ENCODE measurements at regions of chr3 and their contacts with region 1.

Region 1: DNA sequence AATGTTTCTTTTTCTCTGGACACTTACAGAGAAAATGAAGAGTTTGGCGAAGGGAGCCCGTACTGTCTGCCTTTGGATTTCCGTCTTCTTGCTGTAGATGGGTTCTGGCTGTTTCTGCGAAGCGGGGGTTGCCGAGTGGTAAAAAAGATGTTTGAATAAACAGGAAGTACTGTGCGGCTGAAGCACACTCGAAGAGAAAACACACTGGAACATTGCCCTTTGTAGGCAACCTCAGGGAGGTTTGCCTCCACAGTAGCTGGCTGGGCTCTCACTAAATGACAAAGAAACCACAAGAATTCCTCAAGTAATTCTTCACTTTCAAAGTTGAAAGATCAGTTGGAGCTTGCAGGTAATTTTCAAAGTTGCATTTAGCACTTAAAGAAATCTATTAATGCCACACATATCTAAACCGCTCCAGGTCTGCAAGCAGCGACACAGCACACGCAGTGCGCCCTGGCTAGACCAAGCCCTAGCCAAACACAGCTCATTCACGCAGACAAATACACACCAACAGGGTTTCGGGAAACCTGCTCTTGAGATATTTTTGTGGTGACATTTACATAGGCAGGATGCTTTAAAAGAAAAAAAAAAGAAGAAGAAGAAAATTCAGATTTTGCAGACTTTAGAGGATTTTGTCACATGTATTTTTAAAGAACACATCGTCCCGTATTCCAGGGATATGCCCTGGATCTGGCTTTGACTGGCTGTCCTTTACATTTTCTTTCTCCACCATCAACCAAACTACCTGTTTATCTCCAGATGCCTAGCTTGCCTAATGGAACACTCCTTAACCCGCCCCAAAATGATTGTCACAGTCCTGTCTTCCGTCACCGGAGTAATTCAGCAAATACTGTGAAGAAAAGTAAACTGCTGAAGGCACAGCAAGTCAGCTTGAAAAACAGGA is 452.8 kb downstream of the FOXP1 start:
- DNase-seq: peak; percentile 87
- ATAC-seq: peak; percentile 62
- H3K4me3 Mint-ChIP-seq: peak overlapping the region; percentile 77
- H3K27ac Mint-ChIP-seq: peak overlapping the region; percentile 93
- H3K4me1 Mint-ChIP-seq: peaks cover 68% of the 10 kb centered on the region
- H3K27me3 Mint-ChIP-seq: no peaks in the 10 kb centered on the region
- CTCF ChIP-seq: no peak

Region 2: DNA sequence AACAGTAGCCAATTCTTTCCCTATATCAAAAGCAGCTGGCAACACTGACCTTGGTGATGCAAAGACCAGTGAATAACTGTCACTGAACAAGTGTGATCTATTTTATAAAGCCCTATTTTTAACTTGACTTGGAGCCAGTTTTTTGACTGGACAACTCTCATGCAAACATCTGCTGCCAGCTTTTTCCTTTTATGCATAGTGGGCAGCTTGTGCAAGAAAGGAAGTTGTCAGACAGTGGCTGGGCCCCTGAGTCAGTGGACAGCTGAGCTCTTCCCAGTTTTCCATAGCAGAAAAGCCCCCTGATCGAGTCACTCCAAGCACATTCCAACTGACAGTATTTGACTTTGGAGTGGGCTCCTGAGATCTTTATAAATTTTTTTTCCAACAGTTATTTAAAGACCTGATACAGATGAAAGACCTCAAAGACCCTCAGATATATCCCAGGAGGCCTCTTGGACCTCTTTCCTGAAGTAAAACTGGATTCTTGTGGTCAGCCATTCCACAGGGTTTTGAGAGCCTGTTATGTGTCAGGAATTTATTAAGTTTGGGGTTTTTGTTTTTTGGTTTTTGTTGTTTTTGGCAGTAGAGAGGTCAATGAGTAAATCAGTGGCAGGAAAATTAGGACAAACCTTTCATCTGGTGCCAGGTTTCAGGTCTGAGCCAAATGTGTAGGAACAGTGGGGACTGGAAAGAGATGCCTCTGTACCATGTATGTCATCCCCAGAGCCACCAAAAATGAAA is 298.1 kb before region 1 on chr3:
- CTCF ChIA-PET with region 1: no interaction called
- POLR2A ChIA-PET with region 1: no interaction called
- intact Hi-C with region 1: no loop called
- DNase-seq: no peak
- ATAC-seq: no peak
- H3K4me3 Mint-ChIP-seq: no peak overlapping the region
- H3K27ac Mint-ChIP-seq: no peak overlapping the region
- H3K4me1 Mint-ChIP-seq: no peaks in the 10 kb centered on the region
- H3K27me3 Mint-ChIP-seq: no peaks in the 10 kb centered on the region
- CTCF ChIP-seq: no peak

Region 3: GRCh38 chr3:70871909-70872656 is 258.6 kb before region 1 on chr3:
- CTCF ChIA-PET with region 1: no interaction called
- POLR2A ChIA-PET with region 1: no interaction called
- intact Hi-C with region 1: no loop called
- DNase-seq: no peak
- ATAC-seq: no peak
- H3K4me3 Mint-ChIP-seq: no peak overlapping the region
- H3K27ac Mint-ChIP-seq: no peak overlapping the region
- H3K4me1 Mint-ChIP-seq: no peaks in the 10 kb centered on the region
- H3K27me3 Mint-ChIP-seq: peaks cover 8% of the 10 kb centered on the region
- CTCF ChIP-seq: no peak

Region 4: GRCh38 chr3:71006810-71007785 is 123.6 kb before region 1 on chr3:
- CTCF ChIA-PET with region 1: no interaction called
- POLR2A ChIA-PET with region 1: no interaction called
- intact Hi-C with region 1: loop called (anchors 5 kb)
- DNase-seq: no peak
- ATAC-seq: no peak
- H3K4me3 Mint-ChIP-seq: no peak overlapping the region
- H3K27ac Mint-ChIP-seq: peak overlapping the region; percentile 93
- H3K4me1 Mint-ChIP-seq: peaks cover 73% of the 10 kb centered on the region
- H3K27me3 Mint-ChIP-seq: no peaks in the 10 kb centered on the region
- CTCF ChIP-seq: peak; percentile 63

Region 5: DNA sequence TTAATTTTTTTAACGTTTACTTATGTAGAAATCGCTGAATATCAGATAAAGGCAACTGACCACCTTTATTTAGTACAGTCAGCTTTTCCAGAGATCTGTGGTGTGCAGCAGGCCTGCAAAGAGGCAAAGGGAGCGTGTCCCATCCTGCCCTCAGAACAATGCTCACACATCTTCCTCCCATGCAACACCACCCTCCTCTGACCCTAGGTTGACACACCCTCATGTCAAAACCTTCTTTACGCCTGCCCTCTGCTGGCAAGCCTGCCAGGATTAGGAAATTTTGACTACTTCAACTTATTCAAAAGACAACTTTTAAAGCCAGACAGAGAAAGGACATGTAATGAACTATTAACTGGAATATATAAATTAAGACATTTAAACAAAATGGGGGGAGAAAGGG is 60.9 kb before region 1 on chr3:
- CTCF ChIA-PET with region 1: interaction called, 4 read pairs
- POLR2A ChIA-PET with region 1: interaction called, 68 read pairs
- intact Hi-C with region 1: loop called (anchors 5 kb)
- DNase-seq: peak; percentile 88
- ATAC-seq: peak; percentile 43
- H3K4me3 Mint-ChIP-seq: peak overlapping the region; percentile 9
- H3K27ac Mint-ChIP-seq: peak overlapping the region; percentile 79
- H3K4me1 Mint-ChIP-seq: peaks cover 86% of the 10 kb centered on the region
- H3K27me3 Mint-ChIP-seq: no peaks in the 10 kb centered on the region
- CTCF ChIP-seq: peak; percentile 51

Region 6: DNA sequence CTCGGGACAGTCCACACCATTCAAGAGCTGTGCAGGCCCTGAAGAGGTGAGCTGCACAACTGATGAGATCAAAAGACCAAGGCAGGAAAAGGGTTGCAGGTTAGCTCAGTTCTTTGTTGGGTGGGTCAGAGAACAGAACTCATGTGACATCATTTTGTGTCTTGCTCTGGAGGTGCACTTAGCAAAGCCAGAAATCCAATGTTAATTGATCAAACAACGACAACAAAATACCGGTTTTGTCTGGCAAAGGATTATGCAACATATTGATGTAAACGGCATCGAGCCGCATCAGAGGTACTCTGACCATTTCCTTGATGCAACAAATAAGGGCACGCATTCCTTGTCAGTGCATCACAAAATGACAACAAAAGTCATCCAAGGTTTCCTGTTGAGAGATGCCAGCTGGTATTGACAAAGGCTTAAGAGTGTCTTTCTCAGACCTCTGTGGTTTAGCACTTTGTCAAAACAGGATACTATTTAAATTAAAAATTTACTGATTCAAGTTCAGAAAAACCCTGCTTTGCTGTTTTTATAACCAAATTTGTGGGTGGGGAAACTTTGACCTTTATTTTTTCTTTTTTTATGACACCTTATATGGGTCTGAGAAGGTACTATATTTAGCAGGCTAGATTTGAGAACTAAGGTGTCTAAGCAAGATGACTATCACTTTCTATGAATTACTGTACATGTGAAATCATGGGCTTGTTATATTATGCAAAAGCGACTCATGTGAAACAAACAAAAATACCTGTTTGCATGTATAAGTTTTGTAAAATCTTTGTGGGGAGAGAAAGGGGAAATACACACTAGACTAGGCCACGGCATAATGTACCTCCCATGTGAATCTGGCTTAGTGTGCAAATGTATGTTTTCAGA is 43.3 kb before region 1 on chr3:
- CTCF ChIA-PET with region 1: interaction called, 3 read pairs
- POLR2A ChIA-PET with region 1: interaction called, 9 read pairs
- intact Hi-C with region 1: loop called (anchors 2 kb)
- DNase-seq: peak; percentile 71
- ATAC-seq: peak; percentile 72
- H3K4me3 Mint-ChIP-seq: peak overlapping the region; percentile 57
- H3K27ac Mint-ChIP-seq: peak overlapping the region; percentile 93
- H3K4me1 Mint-ChIP-seq: peaks cover 90% of the 10 kb centered on the region
- H3K27me3 Mint-ChIP-seq: no peaks in the 10 kb centered on the region
- CTCF ChIP-seq: no peak

Region 7: GRCh38 chr3:71102111-71102983 is 28.4 kb before region 1 on chr3:
- CTCF ChIA-PET with region 1: no interaction called
- POLR2A ChIA-PET with region 1: no interaction called
- intact Hi-C with region 1: no loop called
- DNase-seq: no peak
- ATAC-seq: no peak
- H3K4me3 Mint-ChIP-seq: peak overlapping the region; percentile 56
- H3K27ac Mint-ChIP-seq: peak overlapping the region; percentile 90
- H3K4me1 Mint-ChIP-seq: peaks cover 87% of the 10 kb centered on the region
- H3K27me3 Mint-ChIP-seq: no peaks in the 10 kb centered on the region
- CTCF ChIP-seq: no peak

Region 8: GRCh38 chr3:71149959-71150954 is 19.5 kb after region 1 on chr3:
- CTCF ChIA-PET with region 1: interaction called, 4 read pairs
- POLR2A ChIA-PET with region 1: interaction called, 18 read pairs
- intact Hi-C with region 1: no loop called
- DNase-seq: no peak
- ATAC-seq: peak; percentile 59
- H3K4me3 Mint-ChIP-seq: peak overlapping the region; percentile 34
- H3K27ac Mint-ChIP-seq: peak overlapping the region; percentile 72
- H3K4me1 Mint-ChIP-seq: peaks cover 61% of the 10 kb centered on the region
- H3K27me3 Mint-ChIP-seq: no peaks in the 10 kb centered on the region
- CTCF ChIP-seq: no peak